ENCODE measurements at regions of chr1 and their contacts with region 1.

Region 1: DNA sequence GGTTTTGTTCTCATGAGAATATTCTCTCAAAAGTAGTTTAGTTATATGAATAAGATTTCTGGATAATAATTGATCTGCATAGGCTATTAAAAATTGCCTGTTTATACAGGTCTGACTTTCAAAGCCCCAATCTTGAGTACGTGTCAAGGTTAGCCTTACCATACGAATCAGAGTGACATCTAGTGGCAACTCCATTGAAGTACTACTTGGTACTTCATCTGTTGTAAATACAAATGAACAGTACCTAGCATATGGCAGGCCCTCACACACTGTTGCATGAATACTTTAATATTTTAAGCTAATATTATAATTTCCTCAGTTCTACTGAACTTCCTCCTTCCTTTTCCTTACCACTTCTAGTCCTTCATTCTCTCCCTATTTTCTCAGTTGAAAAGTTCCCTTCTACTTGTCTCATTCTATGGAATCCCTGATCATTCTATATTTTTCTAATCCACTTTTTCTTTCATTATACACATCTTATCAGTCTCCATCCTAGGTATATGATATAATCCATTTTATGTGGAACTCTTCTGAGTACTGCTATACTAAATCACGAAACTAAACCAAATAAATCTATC is 101.2 kb downstream of the AKT3 start:
- DNase-seq: no peak
- H3K4me3 Mint-ChIP-seq: no peak overlapping the region
- H3K27ac Mint-ChIP-seq: no peak overlapping the region
- H3K4me1 Mint-ChIP-seq: peaks cover 34% of the 10 kb centered on the region
- H3K27me3 Mint-ChIP-seq: no peaks in the 10 kb centered on the region

Region 2: GRCh38 chr1:243508303-243508713 is 240.5 kb before region 1 on chr1:
- CTCF ChIA-PET with region 1: no interaction called
- POLR2A ChIA-PET with region 1: no interaction called
- intact Hi-C with region 1: loop called (anchors 10 kb)
- DNase-seq: no peak
- H3K4me3 Mint-ChIP-seq: no peak overlapping the region
- H3K27ac Mint-ChIP-seq: no peak overlapping the region
- H3K4me1 Mint-ChIP-seq: peaks cover 2% of the 10 kb centered on the region
- H3K27me3 Mint-ChIP-seq: no peaks in the 10 kb centered on the region

Measured in activated CD4-positive, alpha-beta memory T cell treated with anti-CD3 and anti-CD28 coated beads for 36 hours (primary cell).